Calu3 (cell line): ENCODE measurements at regions of chr2 and their contacts with region 1.

Region 1: GRCh38 chr2:85551698-85552678 is 9.3 kb downstream of the GGCX start:
- DNase-seq: peak; percentile 87
- H3K4me3 Mint-ChIP-seq: no peak overlapping the region
- H3K27ac Mint-ChIP-seq: no peak overlapping the region
- H3K4me1 Mint-ChIP-seq: peaks cover 10% of the 10 kb centered on the region
- H3K27me3 Mint-ChIP-seq: no peaks in the 10 kb centered on the region
- CTCF ChIP-seq: peak; percentile 77

Region 2: DNA sequence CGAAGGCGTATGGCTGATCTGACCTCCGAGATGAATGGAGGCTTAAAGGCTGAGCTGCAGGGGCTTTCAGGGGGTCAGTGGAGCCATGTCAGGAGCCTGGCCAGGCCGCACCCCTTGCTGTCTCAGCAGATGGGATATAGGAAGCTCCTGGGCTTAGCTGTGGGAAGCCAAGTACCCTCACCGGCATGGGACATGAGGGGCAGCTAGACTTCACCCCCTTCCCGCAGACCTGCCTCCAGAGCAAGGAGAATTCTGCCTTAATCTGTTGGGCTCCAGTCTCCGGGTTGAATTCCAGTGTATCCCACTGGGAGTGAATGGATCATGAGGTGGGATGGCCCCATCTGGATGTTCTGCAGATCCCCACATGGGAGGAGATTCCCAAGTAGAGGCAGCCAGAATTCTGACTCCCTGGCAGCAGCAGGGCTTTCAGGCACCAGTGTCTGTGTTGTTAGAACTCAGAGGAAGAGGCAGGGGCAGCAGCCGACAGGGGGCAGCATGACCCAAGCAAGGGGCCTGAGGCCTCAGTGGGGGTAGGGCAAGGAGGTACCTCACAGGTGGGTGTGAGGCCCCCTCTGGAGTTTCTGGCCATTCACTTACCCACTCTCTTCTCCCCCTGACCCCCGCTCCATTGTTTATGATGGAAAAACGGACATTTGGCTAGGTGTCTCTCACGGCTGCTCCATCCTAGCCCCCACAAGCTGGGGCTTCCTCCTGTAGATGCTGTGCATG is 160.9 kb before region 1 on chr2:
- CTCF ChIA-PET with region 1: interaction called, 25 read pairs
- intact Hi-C with region 1: loop called (anchors 1 kb)
- DNase-seq: peak; percentile 87
- H3K4me3 Mint-ChIP-seq: no peak overlapping the region
- H3K27ac Mint-ChIP-seq: no peak overlapping the region
- H3K4me1 Mint-ChIP-seq: peaks cover under 1% of the 10 kb centered on the region
- H3K27me3 Mint-ChIP-seq: no peaks in the 10 kb centered on the region
- CTCF ChIP-seq: peak; percentile 69

Region 3: DNA sequence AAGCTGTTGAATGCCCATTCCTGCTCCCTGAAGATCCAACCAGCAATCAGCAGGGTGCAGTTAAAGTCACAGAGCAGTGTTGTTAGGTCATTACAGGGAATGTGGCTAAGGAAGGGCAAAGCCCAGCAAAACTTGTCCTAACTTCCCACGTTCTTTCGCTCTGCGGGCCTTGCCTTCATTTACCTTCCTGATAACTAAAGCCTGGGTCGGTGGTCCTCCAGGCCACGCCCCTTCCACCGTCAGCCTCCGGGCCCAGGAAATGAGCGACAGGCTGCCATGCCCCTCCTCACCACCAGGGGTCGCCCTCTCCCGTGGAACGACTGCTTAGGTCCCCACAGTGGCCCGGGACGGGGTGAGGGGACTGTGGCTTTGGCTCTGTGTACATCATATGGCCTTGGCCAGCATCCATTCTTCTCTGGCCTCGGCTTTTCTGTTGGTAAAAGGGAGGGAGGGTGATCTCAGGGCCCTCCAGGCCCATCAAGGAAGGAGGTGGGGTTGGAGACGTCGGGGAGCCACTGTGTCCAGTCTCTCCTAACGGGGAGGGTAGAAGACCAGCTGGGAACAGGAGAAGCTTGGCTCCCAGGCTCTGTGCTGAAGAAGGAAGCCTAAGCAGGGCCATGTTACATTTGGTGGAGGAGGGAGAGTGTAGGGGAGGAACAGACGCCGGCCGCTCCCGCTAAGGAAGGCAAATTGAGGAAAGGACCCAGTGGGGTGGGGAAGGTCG is 131.3 kb before region 1 on chr2:
- CTCF ChIA-PET with region 1: interaction called, 66 read pairs
- intact Hi-C with region 1: loop called (anchors 1 kb)
- DNase-seq: peak; percentile 94
- H3K4me3 Mint-ChIP-seq: peak overlapping the region; percentile 56
- H3K27ac Mint-ChIP-seq: peak overlapping the region; percentile 84
- H3K4me1 Mint-ChIP-seq: peaks cover 37% of the 10 kb centered on the region
- H3K27me3 Mint-ChIP-seq: no peaks in the 10 kb centered on the region
- CTCF ChIP-seq: peak; percentile 97